ENCODE measurements at regions of chr6 and their contacts with region 1.

Region 1: DNA sequence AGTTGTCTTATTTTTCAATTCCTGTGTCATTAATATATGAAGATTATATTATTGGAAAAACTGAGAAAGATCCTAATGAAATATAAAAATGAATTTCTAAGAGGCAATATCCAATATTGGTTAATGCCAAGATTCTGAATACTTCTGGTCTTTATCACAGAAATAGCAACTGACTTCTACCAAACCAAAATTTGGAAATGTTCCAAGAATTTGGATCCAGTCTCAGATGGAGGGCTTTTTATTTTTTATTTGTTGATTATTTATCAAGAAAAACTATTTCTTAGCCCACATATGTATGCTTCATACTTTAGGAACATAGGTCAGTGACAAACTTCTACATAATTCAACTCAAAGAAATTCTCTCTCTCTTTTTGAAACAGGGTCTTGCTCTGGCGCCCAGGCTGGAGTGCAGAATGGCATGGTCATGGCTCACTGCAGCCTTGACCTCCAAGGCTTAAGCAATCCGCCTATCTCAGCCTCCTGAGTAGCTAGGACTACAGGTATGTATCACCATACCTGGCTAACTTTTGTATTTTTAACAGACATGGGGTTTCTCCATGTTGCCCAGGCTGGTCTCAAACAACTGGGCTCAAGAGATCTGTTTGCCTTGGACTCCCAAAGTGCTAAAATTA is 13.1 kb downstream of the NUP43 start:
- DNase-seq: no peak
- ATAC-seq: no peak
- H3K4me3 ChIP-seq: no peak overlapping the region
- H3K27ac ChIP-seq: no peak overlapping the region
- H3K4me1 ChIP-seq: no peaks in the 10 kb centered on the region
- H3K27me3 ChIP-seq: no peaks in the 10 kb centered on the region
- CTCF ChIP-seq: no peak

Region 2: DNA sequence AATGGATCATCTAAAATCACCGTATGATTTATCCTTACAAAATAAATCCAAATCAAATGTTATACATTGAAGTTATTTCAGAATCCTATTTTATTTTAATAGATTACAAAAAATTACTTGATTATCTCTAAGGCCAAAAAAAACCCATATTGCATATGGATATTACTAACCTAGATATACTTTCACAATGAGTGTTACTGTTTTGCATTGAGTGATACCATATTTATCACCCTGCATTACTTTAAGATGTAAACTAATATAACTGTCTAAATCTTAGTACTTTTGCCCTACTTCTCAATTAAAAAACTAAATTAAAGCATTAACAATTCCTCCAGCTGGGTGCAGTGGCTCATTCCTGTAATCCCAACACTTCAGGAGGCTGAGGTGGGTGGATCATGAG is 198.5 kb before region 1 on chr6:
- CTCF ChIA-PET with region 1: no interaction called
- POLR2A ChIA-PET with region 1: no interaction called
- in situ Hi-C with region 1: no loop called
- intact Hi-C with region 1: no loop called
- DNase-seq: no peak
- ATAC-seq: no peak
- H3K4me3 ChIP-seq: no peak overlapping the region
- H3K27ac ChIP-seq: no peak overlapping the region
- H3K4me1 ChIP-seq: no peaks in the 10 kb centered on the region
- H3K27me3 ChIP-seq: no peaks in the 10 kb centered on the region
- CTCF ChIP-seq: no peak

Region 3: GRCh38 chr6:149691201-149691600 is 42.0 kb before region 1 on chr6:
- CTCF ChIA-PET with region 1: no interaction called
- POLR2A ChIA-PET with region 1: no interaction called
- in situ Hi-C with region 1: no loop called
- intact Hi-C with region 1: no loop called
- DNase-seq: no peak
- ATAC-seq: no peak
- H3K4me3 ChIP-seq: no peak overlapping the region
- H3K27ac ChIP-seq: no peak overlapping the region
- H3K4me1 ChIP-seq: no peaks in the 10 kb centered on the region
- H3K27me3 ChIP-seq: no peaks in the 10 kb centered on the region
- CTCF ChIP-seq: no peak

Region 4: GRCh38 chr6:149701714-149702113 is 31.5 kb before region 1 on chr6:
- CTCF ChIA-PET with region 1: no interaction called
- POLR2A ChIA-PET with region 1: interaction called, 10 read pairs
- in situ Hi-C with region 1: no loop called
- intact Hi-C with region 1: no loop called
- DNase-seq: no peak
- ATAC-seq: no peak
- H3K4me3 ChIP-seq: no peak overlapping the region
- H3K27ac ChIP-seq: no peak overlapping the region
- H3K4me1 ChIP-seq: no peaks in the 10 kb centered on the region
- H3K27me3 ChIP-seq: no peaks in the 10 kb centered on the region
- CTCF ChIP-seq: no peak